Left cardiac atrium (tissue), 4 donors: ENCODE measurements at regions of chr13 and their contacts with region 1.

Region 1: GRCh38 chr13:27977476-27978300 is 8.6 kb upstream of the CDX2 start:
- DNase-seq: no peak
- ATAC-seq: no peak

Region 2: GRCh38 chr13:27374650-27375049 is 603.0 kb before region 1 on chr13:
- intact Hi-C with region 1: loop called in 1 of 2 experiments (anchors 5 kb)
- DNase-seq: peak; percentile 69
- ATAC-seq: peak; percentile 96 to 98

Region 3: DNA sequence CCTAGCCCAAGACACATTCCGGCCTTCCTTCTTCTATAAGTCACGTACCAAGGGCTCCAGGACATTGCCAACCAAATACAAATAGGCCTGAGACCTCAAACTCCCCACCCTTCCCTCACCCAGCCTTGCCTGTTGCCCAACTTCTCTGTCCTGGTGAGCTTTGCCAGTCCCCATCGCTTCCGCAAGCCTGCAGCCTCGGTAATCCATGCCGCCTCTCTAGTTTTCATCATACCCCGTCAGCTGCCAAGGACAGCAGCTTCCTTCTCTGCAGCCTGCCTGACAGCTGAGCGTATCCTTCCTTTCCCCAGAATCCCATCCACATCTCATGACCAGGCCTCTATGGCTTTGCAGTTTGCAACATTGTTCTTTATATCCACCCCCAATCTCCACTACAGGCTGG is 644.6 kb after region 1 on chr13:
- intact Hi-C with region 1: no loop called
- DNase-seq: peak; percentile 56
- ATAC-seq: peak; percentile 47 to 75